GM12878 (cell line): ENCODE measurements at regions of chr10 and their contacts with region 1.

Region 1: GRCh38 chr10:34522546-34522945 is 292.6 kb downstream of the PARD3 start:
- DNase-seq: no peak
- ATAC-seq: peak; percentile 63
- H3K4me3 ChIP-seq: no peak overlapping the region
- H3K27ac ChIP-seq: no peak overlapping the region
- H3K4me1 ChIP-seq: peaks cover 7% of the 10 kb centered on the region; the same call in 1 of the 2 replicates
- H3K27me3 ChIP-seq: no peaks in the 10 kb centered on the region
- CTCF ChIP-seq: peak; percentile 62 to 63 (median 63)
- EP300 ChIP-seq: no peak
- POLR2A ChIP-seq: no peak
- RAD21 ChIP-seq: peak; percentile 84

Region 2: DNA sequence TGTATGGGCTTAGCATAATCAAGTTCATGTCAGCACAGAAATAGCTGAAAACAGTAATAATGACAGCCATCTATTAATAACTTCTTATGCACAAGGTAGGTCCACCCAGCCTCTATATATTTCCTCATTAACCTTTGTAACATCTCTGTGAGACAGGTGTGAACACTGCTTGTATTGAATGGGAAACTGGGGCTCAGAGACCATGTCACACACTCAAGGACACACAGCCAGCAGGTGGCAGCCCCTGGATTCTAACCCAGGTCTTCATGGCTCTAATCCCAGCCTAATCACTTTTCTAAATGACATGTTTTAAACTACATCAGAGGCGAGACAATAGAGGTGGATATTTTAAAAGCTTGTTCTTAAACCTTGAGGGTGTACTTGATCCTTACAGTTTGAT is 298.9 kb before region 1 on chr10:
- CTCF ChIA-PET with region 1: interaction called, 12 read pairs
- POLR2A ChIA-PET with region 1: no interaction called
- RAD21 ChIA-PET with region 1: interaction called, 3 read pairs
- SMC1A ChIA-PET with region 1: interaction called, 6 read pairs
- in situ Hi-C with region 1: no loop called
- intact Hi-C with region 1: no loop called
- DNase-seq: no peak
- ATAC-seq: peak; percentile 53
- H3K4me3 ChIP-seq: no peak overlapping the region
- H3K27ac ChIP-seq: no peak overlapping the region
- H3K4me1 ChIP-seq: no peaks in the 10 kb centered on the region
- H3K27me3 ChIP-seq: no peaks in the 10 kb centered on the region; a peak in 1 of 4 replicates
- CTCF ChIP-seq: no peak; a peak in 1 of 6 replicates
- EP300 ChIP-seq: no peak
- POLR2A ChIP-seq: no peak
- RAD21 ChIP-seq: no peak

Region 3: DNA sequence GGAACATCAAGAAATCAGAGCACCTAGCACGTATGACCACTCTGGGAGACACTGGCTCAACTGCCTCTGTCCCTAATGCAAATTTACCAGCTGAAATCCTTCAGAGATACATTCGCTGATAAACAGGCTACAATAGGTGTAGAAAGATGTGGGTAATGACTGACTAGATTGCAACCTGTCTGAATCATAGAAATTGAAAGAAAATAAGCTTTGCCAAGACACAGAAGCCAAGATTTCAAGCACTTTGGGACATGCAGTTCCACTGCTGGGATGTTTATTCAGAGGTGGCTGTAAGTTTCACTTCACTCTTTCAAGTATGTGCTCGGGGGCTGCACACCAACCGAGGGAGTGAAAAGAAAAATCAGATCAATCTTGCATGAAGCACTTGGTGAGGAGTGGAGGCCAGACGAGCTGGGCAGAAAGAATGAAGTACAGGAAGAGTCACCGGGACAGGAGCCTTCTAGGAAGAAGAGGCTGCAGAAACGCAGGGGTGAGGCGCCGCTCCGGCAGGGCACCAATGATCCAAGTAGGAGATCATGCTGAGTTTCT is 15.8 kb after region 1 on chr10:
- CTCF ChIA-PET with region 1: interaction called, 5 read pairs
- POLR2A ChIA-PET with region 1: interaction called, 7 read pairs
- RAD21 ChIA-PET with region 1: interaction called, 10 read pairs
- SMC1A ChIA-PET with region 1: interaction called, 25 read pairs
- in situ Hi-C with region 1: no loop called
- intact Hi-C with region 1: no loop called
- DNase-seq: peak; percentile 57
- ATAC-seq: peak; percentile 77
- H3K4me3 ChIP-seq: peak overlapping the region; percentile 31; the same call in 1 of the 2 replicates
- H3K27ac ChIP-seq: peak overlapping the region; percentile 39
- H3K4me1 ChIP-seq: peaks cover 18% of the 10 kb centered on the region
- H3K27me3 ChIP-seq: no peaks in the 10 kb centered on the region
- CTCF ChIP-seq: no peak
- EP300 ChIP-seq: no peak
- POLR2A ChIP-seq: no peak
- RAD21 ChIP-seq: no peak

Region 4: GRCh38 chr10:34553747-34554146 is 31.2 kb after region 1 on chr10:
- CTCF ChIA-PET with region 1: interaction called, 10 read pairs
- POLR2A ChIA-PET with region 1: no interaction called
- RAD21 ChIA-PET with region 1: no interaction called
- SMC1A ChIA-PET with region 1: interaction called, 3 read pairs
- in situ Hi-C with region 1: no loop called
- intact Hi-C with region 1: no loop called
- DNase-seq: no peak
- ATAC-seq: no peak
- H3K4me3 ChIP-seq: no peak overlapping the region
- H3K27ac ChIP-seq: no peak overlapping the region
- H3K4me1 ChIP-seq: no peaks in the 10 kb centered on the region
- H3K27me3 ChIP-seq: 0 out of 4 replicates have a peak, but pooled peaks cover 0 to under 1% of the 10 kb centered on the region in 2 experiments
- CTCF ChIP-seq: no peak
- EP300 ChIP-seq: no peak
- POLR2A ChIP-seq: no peak
- RAD21 ChIP-seq: no peak

Region 5: DNA sequence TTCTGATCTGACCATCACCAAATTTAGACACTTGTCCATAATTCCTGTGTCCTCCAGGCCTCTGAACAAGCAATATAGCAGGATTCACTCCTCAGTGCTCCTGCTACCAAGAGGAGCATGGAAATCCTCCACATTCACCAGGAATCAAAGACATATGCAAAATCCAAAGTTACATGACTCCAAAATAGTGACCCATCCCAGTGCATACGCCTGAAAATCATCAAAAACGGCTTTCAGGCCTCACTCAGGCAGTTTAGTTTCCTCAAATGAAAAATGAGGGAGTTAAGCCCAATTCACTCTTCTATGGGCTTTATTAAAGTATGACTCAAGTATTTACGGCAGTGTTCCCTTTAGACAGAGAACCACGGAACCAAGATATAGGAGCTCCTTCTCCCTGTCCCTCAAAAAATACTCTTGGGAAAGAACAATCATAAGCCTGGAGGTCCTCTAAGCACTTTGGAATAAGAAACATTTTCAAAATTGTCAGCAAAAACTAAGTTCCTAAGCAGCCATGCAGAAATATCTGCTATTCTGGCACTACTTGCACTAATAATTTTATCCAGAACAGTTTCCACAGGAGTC is 51.9 kb after region 1 on chr10:
- CTCF ChIA-PET with region 1: interaction called, 11 read pairs
- POLR2A ChIA-PET with region 1: no interaction called
- RAD21 ChIA-PET with region 1: interaction called, 5 read pairs
- SMC1A ChIA-PET with region 1: interaction called, 7 read pairs
- in situ Hi-C with region 1: no loop called
- intact Hi-C with region 1: loop called (anchors 5 kb)
- DNase-seq: no peak
- ATAC-seq: no peak
- H3K4me3 ChIP-seq: no peak overlapping the region
- H3K27ac ChIP-seq: no peak overlapping the region
- H3K4me1 ChIP-seq: no peaks in the 10 kb centered on the region
- H3K27me3 ChIP-seq: no peaks in the 10 kb centered on the region
- CTCF ChIP-seq: no peak
- EP300 ChIP-seq: no peak
- POLR2A ChIP-seq: no peak
- RAD21 ChIP-seq: no peak

Region 6: GRCh38 chr10:34615770-34616169 is 93.2 kb after region 1 on chr10:
- CTCF ChIA-PET with region 1: interaction called, 15 read pairs
- POLR2A ChIA-PET with region 1: interaction called, 3 read pairs
- RAD21 ChIA-PET with region 1: interaction called, 5 read pairs
- SMC1A ChIA-PET with region 1: interaction called, 16 read pairs
- in situ Hi-C with region 1: no loop called
- intact Hi-C with region 1: no loop called
- DNase-seq: no peak
- ATAC-seq: peak; percentile 84
- H3K4me3 ChIP-seq: no peak overlapping the region
- H3K27ac ChIP-seq: no peak overlapping the region
- H3K4me1 ChIP-seq: no peaks in the 10 kb centered on the region
- H3K27me3 ChIP-seq: no peaks in the 10 kb centered on the region
- CTCF ChIP-seq: no peak
- EP300 ChIP-seq: 0 out of 4 replicates have a peak, but pooled peaks of 1 of the 2 experiments have one; percentile 20
- POLR2A ChIP-seq: no peak
- RAD21 ChIP-seq: no peak

Region 7: DNA sequence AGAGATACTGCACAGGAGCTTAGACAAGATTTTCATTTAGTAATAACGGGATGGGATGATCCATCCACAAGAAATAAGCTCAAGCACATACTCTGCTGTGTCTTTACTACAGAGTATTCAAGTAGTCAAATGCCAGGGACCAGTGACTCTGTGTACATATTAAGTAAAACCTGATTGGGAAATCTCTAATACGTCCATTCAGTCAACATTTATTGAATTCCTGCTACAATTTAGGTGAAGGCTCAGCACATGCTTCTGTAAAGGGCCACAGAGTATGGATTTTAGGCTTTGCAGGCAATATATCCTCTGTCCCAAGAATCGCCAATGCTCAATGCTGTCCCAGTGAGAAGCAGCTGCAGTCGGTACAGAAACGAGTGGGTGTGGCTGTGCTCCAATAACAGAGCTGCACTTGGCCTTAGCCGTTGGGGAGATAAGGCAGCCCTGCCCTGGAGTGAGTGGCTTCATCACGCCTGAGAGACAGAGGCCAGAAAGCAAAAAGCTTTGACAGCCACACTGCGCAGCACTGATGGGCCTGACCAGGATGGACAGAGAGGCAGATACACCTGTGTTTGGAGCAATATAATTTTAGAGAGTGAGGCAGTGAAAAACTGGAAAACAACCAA is 105.7 kb after region 1 on chr10:
- CTCF ChIA-PET with region 1: interaction called, 23 read pairs
- POLR2A ChIA-PET with region 1: interaction called, 10 read pairs
- RAD21 ChIA-PET with region 1: interaction called, 3 read pairs
- SMC1A ChIA-PET with region 1: interaction called, 6 read pairs
- in situ Hi-C with region 1: no loop called
- intact Hi-C with region 1: no loop called
- DNase-seq: no peak
- ATAC-seq: peak; percentile 10; the same call in 1 of the 3 replicates
- H3K4me3 ChIP-seq: no peak overlapping the region
- H3K27ac ChIP-seq: no peak overlapping the region
- H3K4me1 ChIP-seq: no peaks in the 10 kb centered on the region
- H3K27me3 ChIP-seq: no peaks in the 10 kb centered on the region
- CTCF ChIP-seq: no peak
- EP300 ChIP-seq: no peak
- POLR2A ChIP-seq: no peak
- RAD21 ChIP-seq: no peak

Region 8: DNA sequence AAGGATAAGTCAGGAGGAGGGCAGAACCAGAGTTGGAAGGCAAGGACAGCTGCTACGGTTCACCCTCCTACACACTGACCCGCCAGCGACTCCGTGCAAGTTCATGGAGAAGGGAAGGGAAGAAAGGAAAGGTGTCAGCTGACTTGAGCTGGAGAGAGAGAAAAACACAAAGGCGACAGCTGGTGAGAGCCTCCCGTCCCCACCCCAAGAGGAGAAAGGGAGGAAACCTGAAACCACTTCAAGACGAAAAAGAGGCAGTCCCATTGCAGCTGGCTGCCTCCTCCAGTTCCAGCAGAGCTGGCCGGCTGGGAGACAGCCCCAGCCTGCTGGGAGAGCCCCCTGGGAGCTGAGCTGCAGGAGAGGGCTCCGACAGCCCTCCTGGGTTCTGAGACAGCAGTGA is 217.4 kb after region 1 on chr10:
- CTCF ChIA-PET with region 1: no interaction called
- POLR2A ChIA-PET with region 1: no interaction called
- RAD21 ChIA-PET with region 1: no interaction called
- SMC1A ChIA-PET with region 1: no interaction called
- in situ Hi-C with region 1: no loop called
- intact Hi-C with region 1: no loop called
- DNase-seq: no peak
- ATAC-seq: peak; percentile 28
- H3K4me3 ChIP-seq: no peak overlapping the region
- H3K27ac ChIP-seq: no peak overlapping the region
- H3K4me1 ChIP-seq: no peaks in the 10 kb centered on the region
- H3K27me3 ChIP-seq: peaks cover 0 to 11% of the 10 kb centered on the region in 2 experiments; a peak in 2 of 4 replicates
- CTCF ChIP-seq: no peak
- EP300 ChIP-seq: no peak
- POLR2A ChIP-seq: no peak
- RAD21 ChIP-seq: no peak